AG04449 (cell line): ENCODE measurements at regions of chr16 and their contacts with region 1.

Region 1: DNA sequence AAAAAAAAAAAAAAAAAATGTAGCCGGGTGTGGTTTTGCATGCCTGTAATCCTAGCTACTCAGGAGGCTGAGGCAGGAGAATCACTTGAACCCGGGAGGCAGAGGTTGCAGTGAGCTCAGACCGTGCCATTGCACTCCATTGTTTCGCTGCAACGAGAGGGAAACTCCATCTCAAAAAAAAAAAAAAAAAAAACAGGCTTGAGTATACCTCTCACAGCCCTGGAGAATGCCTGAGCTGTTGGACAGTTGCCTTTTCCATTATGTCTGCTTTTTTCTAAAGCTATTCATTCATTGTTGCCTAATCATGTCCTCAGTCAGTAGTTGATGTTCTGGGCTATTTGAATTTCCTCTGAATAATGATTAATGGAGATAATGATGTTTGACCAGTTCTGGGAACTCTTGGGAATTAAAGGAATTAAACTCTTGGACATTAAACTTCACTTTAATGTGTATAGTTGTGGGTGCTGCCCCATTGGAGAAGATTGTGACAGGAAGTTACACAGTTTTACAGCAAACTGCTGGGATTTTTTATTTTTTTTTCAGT is 11.8 kb downstream of the HMOX2 start:
- DNase-seq: no peak
- H3K4me3 ChIP-seq: no peak overlapping the region
- CTCF ChIP-seq: no peak

Region 2: GRCh38 chr16:4425378-4426020 is 62.5 kb before region 1 on chr16 and contains the start of gene DNAJA3:
- CTCF ChIA-PET with region 1: no interaction called
- POLR2A ChIA-PET with region 1: no interaction called
- DNase-seq: peak; percentile 74
- H3K4me3 ChIP-seq: peak within 1 kb of the TSS; percentile 72
- CTCF ChIP-seq: no peak

Region 3: GRCh38 chr16:4475880-4476788 is 11.9 kb before region 1 on chr16 and contains the start of gene HMOX2:
- CTCF ChIA-PET with region 1: interaction called, 25 read pairs
- POLR2A ChIA-PET with region 1: interaction called, 5 read pairs
- DNase-seq: no peak
- H3K4me3 ChIP-seq: peak within 1 kb of the TSS; percentile 89
- CTCF ChIP-seq: peak; percentile 74

Region 4: DNA sequence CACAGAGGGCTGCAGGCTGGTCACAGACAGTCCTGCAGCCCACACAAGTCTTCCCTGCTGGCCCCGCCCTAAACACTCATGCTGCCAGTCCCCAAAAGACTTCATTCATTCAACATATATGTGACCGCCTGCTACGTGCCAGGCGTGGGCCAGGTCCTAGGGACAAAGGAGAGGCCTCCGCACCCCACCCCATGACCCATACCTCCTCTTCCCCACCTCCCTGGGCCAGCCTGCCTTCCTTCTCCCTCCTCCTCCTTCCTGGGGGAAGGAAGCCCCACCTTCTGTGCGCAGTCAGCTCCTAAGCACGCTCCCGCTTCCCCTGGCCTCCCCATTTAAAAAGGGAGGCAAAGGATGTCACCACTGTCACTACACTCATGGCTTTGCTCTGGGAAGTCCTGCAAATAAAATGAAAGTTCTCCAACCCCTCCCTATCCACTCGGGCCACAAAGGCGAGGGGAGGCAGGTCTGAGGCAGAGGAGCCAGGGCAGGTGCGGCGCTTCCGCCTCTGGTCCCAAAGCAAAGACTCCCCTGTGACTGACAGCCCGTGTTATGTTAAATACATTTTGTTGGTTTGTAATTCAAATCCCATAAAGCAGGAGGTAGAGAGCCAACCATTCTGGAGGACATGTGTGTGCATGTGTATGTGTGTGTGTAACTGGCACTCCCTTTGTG is 255.3 kb after region 1 on chr16:
- CTCF ChIA-PET with region 1: no interaction called
- POLR2A ChIA-PET with region 1: no interaction called
- DNase-seq: no peak
- H3K4me3 ChIP-seq: no peak overlapping the region
- CTCF ChIP-seq: no peak